T-cell (primary cell): ENCODE measurements at regions of chr1 and their contacts with region 1.

Region 1: DNA sequence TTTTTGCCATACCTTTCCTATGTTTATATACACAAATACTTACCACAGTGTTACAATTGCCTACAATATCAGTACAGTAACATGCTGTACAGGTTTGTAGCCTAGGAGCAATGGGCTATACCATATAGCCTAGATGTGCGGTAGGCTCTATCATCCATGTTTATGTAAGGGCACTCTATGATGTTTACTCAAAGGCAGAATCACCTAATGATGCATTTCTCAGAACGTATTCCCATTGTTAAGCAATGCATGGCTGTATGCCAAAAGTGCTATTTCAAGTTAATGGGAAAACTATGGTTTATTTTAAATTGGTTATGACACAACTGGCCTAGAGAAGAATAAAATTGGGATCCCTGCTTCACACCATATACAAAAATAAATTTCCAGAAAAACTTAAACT is 36.9 kb upstream of the DISP1 start:
- DNase-seq: no peak
- ATAC-seq: no peak
- H3K4me3 ChIP-seq: no peak overlapping the region
- H3K4me3 Mint-ChIP-seq: no peak overlapping the region
- H3K27ac ChIP-seq: no peak overlapping the region
- H3K27ac Mint-ChIP-seq: no peak overlapping the region
- H3K4me1 ChIP-seq: peaks cover 0 to 3% of the 10 kb centered on the region in 2 experiments
- H3K4me1 Mint-ChIP-seq: peaks cover 4 to 7% (median 6%) of the 10 kb centered on the region in 3 donors
- H3K27me3 ChIP-seq: peaks cover 0 to 3% of the 10 kb centered on the region in 2 experiments
- H3K27me3 Mint-ChIP-seq: peaks cover 7 to 11% of the 10 kb centered on the region in 2 donors

Region 2: DNA sequence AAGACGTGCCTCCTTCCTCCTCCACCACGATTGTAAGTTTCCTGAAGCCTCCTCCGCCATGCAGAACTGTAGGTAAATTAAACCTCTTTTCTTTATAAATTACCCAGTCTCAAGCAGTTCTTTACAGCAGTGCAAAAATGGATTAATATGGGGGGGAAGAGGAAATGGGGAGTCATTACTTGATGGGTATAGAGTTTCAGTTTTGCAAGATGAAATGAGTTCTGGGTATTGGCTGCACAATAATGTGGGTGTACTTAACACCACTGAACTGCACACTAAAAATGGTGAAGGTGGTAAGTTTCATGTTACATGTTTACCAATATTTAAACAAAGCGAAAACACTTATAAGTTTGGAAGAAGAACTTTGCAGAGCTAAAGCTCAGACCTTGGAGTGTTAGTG is 12.5 kb after region 1 on chr1:
- CTCF ChIA-PET with region 1: interaction called in 1 of 2 experiments, 10 read pairs
- POLR2A ChIA-PET with region 1: no interaction called
- DNase-seq: no peak
- ATAC-seq: no peak
- H3K4me3 ChIP-seq: no peak overlapping the region
- H3K4me3 Mint-ChIP-seq: no peak overlapping the region
- H3K27ac ChIP-seq: no peak overlapping the region
- H3K27ac Mint-ChIP-seq: no peak overlapping the region
- H3K4me1 ChIP-seq: no peaks in the 10 kb centered on the region
- H3K4me1 Mint-ChIP-seq: no peaks in the 10 kb centered on the region
- H3K27me3 ChIP-seq: no peaks in the 10 kb centered on the region
- H3K27me3 Mint-ChIP-seq: peaks cover 0 to 4% of the 10 kb centered on the region in 2 donors